Kidney (tissue), 22 donors: ENCODE measurements at regions of chr11 and their contacts with region 1.

Region 1: GRCh38 chr11:63641727-63642126 is 27.5 kb upstream of the PLAAT3 start:
- DNase-seq: no peak
- H3K4me3 ChIP-seq: no peak overlapping the region
- H3K27ac ChIP-seq: no peak overlapping the region
- H3K4me1 ChIP-seq: no peaks in the 10 kb centered on the region
- H3K27me3 ChIP-seq: no peaks in the 10 kb centered on the region
- CTCF ChIP-seq: no peak

Region 2: GRCh38 chr11:63472388-63472787 is 169.3 kb before region 1 on chr11:
- intact Hi-C with region 1: loop called (anchors 5 kb)
- DNase-seq: no peak
- H3K4me3 ChIP-seq: no peak overlapping the region
- H3K27ac ChIP-seq: no peak overlapping the region
- H3K4me1 ChIP-seq: no peaks in the 10 kb centered on the region
- H3K27me3 ChIP-seq: no peaks in the 10 kb centered on the region
- CTCF ChIP-seq: no peak

Region 3: DNA sequence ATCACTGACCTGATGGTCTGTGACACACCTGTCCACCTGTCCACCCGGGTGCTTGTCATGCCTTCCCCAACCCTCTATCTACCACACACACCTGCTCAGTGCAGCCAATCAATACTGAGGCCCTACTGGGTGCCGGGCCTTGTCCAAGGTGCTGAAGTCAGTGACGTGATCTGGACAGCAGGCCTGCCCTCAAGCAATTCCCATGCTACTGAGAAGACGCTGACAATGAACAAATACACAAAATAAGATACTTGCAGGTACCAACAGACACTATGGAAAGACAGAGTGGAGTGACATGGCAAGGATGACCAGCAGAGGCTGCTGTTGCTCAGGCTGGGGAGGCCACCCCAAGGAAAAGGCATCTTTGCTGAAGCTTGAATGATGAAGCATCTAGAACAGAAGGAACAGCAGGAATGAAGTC is 48.7 kb before region 1 on chr11:
- intact Hi-C with region 1: no loop called
- DNase-seq: peak in 1 of 5 donors; percentile 20
- H3K4me3 ChIP-seq: no peak overlapping the region
- H3K27ac ChIP-seq: no peak overlapping the region
- H3K4me1 ChIP-seq: no peaks in the 10 kb centered on the region
- H3K27me3 ChIP-seq: no peaks in the 10 kb centered on the region
- CTCF ChIP-seq: peak; percentile 49